ENCODE measurements at regions of chr1 and their contacts with region 1.

Region 1: GRCh38 chr1:102191723-102192122 is 195.0 kb upstream of the OLFM3 start:
- DNase-seq: peak; percentile 59
- ATAC-seq: no peak
- H3K4me3 ChIP-seq: no peak overlapping the region
- H3K27ac ChIP-seq: no peak overlapping the region
- H3K4me1 ChIP-seq: no peaks in the 10 kb centered on the region
- H3K27me3 ChIP-seq: no peaks in the 10 kb centered on the region
- CTCF ChIP-seq: peak; percentile 67

Region 2: GRCh38 chr1:101820071-101820470 is 371.7 kb before region 1 on chr1:
- CTCF ChIA-PET with region 1: no interaction called
- POLR2A ChIA-PET with region 1: no interaction called
- intact Hi-C with region 1: loop called (anchors 2 kb)
- DNase-seq: peak; percentile 57
- ATAC-seq: peak; percentile 69
- H3K4me3 ChIP-seq: no peak overlapping the region
- H3K27ac ChIP-seq: no peak overlapping the region
- H3K4me1 ChIP-seq: no peaks in the 10 kb centered on the region
- H3K27me3 ChIP-seq: peaks cover 37% of the 10 kb centered on the region
- CTCF ChIP-seq: peak; percentile 62

Region 3: DNA sequence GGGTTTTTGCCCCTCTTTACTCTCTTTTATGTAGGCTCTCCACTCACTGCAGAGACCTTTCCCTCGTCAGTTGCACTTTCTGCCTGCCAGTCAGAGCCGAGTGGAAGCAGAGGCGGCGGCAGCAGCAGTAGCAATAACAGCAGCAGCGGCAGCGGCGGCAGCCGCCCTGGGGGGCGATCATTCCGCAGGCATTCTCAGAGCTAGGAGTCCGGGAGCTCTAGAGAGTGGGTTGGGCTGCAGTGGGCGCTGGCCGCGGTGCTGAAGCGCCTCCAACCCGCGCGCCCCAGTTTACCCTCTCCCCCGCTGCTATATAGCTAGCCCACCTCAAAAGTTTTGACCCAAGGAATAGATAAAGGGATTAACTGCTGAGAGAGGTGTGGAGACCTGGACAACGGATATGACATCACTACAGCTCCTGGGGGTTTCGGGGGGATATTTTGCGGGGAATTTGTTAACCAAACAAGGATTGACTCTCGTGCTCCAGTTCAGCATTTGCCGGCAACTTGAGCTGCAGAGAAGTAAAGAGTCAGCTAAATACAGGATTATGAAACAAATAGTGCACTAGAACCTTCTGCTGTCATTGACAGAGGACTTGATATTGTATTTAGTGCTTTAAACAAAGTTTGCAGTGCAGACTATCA is 194.8 kb before region 1 on chr1 and contains the start of gene OLFM3:
- CTCF ChIA-PET with region 1: no interaction called
- POLR2A ChIA-PET with region 1: no interaction called
- intact Hi-C with region 1: loop called (anchors 10 kb)
- DNase-seq: no peak
- ATAC-seq: no peak
- H3K4me3 ChIP-seq: no peak within 1 kb of the TSS
- H3K27ac ChIP-seq: no peak within 1 kb of the TSS
- H3K4me1 ChIP-seq: no peaks in the 10 kb centered on the region
- H3K27me3 ChIP-seq: peaks cover 24% of the 10 kb centered on the region
- CTCF ChIP-seq: no peak
- total RNA-seq, gene OLFM3: not detected in 2 replicates

Region 4: GRCh38 chr1:102118150-102118549 is 73.6 kb before region 1 on chr1:
- CTCF ChIA-PET with region 1: no interaction called
- POLR2A ChIA-PET with region 1: no interaction called
- intact Hi-C with region 1: no loop called
- DNase-seq: no peak
- ATAC-seq: no peak
- H3K4me3 ChIP-seq: no peak overlapping the region
- H3K27ac ChIP-seq: no peak overlapping the region
- H3K4me1 ChIP-seq: no peaks in the 10 kb centered on the region
- H3K27me3 ChIP-seq: no peaks in the 10 kb centered on the region; the same call in 1 of the 2 replicates
- CTCF ChIP-seq: no peak